ENCODE measurements at regions of chr5 and their contacts with region 1.

Region 1: GRCh38 chr5:149141224-149141956 is at the start of gene ABLIM3:
- DNase-seq: peak; percentile 94
- H3K4me3 Mint-ChIP-seq: peak within 1 kb of the TSS; percentile 97
- H3K27ac Mint-ChIP-seq: peak within 1 kb of the TSS; percentile 97
- H3K4me1 Mint-ChIP-seq: peaks cover 49% of the 10 kb centered on the region
- H3K27me3 Mint-ChIP-seq: no peaks in the 10 kb centered on the region
- CTCF ChIP-seq: peak; percentile 99
- total RNA-seq, gene ABLIM3: 58.2 and 70.9 TPM in 2 replicates

Region 2: GRCh38 chr5:149153751-149154610 is 12.6 kb after region 1 on chr5:
- CTCF ChIA-PET with region 1: interaction called, 11 read pairs
- intact Hi-C with region 1: loop called (anchors 2 kb)
- DNase-seq: peak; percentile 60
- H3K4me3 Mint-ChIP-seq: peak overlapping the region; percentile 4
- H3K27ac Mint-ChIP-seq: peak overlapping the region; percentile 89
- H3K4me1 Mint-ChIP-seq: peaks cover 3% of the 10 kb centered on the region
- H3K27me3 Mint-ChIP-seq: no peaks in the 10 kb centered on the region
- CTCF ChIP-seq: no peak

Region 3: GRCh38 chr5:149161026-149161687 is 19.8 kb after region 1 on chr5:
- CTCF ChIA-PET with region 1: interaction called, 11 read pairs
- intact Hi-C with region 1: no loop called
- DNase-seq: no peak
- H3K4me3 Mint-ChIP-seq: peak overlapping the region; percentile 43
- H3K27ac Mint-ChIP-seq: peak overlapping the region; percentile 98
- H3K4me1 Mint-ChIP-seq: peaks cover 75% of the 10 kb centered on the region
- H3K27me3 Mint-ChIP-seq: no peaks in the 10 kb centered on the region
- CTCF ChIP-seq: no peak

Region 4: DNA sequence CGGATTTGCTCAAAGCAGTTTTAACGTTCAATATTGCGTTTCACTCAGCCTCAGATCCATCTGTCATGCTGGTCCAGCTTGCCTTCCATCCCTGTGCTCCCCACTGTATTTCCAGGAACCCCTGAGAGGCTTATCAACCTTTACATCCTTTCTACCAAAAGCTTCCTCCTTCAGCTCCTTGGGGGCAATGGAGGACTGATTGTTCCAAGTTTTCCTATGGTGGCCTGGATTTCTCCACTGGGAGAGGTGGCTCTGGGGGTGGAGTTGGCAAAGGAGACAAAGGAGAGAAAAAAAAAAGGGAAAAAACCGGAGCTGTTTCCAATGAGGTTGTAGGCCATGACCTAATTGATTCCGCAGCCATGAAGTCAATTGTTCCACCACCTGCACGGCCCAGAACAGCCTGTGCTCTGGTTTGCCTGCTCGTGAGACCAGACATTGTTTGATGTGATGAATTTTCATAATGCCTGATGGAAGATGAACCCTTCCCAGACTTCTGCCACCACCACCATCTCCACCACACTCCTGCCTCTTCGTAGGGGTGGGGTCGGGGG is 54.0 kb after region 1 on chr5:
- CTCF ChIA-PET with region 1: interaction called, 6 read pairs
- intact Hi-C with region 1: loop called (anchors 1 kb)
- DNase-seq: no peak
- H3K4me3 Mint-ChIP-seq: no peak overlapping the region
- H3K27ac Mint-ChIP-seq: peak overlapping the region; percentile 50
- H3K4me1 Mint-ChIP-seq: peaks cover 53% of the 10 kb centered on the region
- H3K27me3 Mint-ChIP-seq: no peaks in the 10 kb centered on the region
- CTCF ChIP-seq: no peak